ENCODE measurements at regions of chr14 and their contacts with region 1.

Region 1: DNA sequence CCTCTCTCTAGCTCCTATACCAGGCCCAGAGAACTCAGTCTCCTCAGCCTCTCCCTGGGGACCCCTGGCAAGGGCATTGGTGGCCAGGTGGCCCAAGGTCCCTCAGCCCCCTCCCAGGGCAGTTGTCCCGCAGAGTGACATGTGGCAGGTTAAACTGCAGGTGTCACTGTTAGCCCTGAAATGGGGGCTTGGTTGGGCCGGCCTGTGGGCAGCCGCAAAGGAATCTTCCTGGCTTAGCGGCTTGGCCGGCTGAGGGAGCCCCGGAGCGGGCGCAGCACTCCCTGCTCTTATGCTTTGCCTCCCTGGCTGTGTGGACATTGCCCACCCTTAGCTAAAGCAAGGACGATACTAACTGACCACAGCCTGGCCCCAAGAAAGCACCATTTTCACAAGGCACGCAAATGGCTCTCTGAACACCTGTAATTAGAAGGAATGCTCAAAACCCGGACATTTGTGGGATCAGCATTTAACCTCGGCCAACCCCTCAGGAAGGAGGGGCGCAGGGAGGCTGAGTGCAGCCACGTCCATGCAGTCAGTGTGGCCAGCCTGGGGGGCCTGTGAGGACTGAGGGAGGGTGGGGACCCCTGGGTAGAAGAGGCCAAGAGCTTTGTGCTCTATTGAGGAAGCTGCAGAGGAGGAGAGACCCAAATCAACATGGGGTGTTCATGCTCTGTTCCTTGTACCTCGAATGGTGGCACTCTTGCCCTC is 82.2 kb downstream of the PAPOLA start:
- DNase-seq: peak; percentile 57 to 62
- ATAC-seq: peak; percentile 76 to 93
- H3K4me3 ChIP-seq: no peak overlapping the region
- H3K27ac ChIP-seq: no peak overlapping the region
- H3K4me1 ChIP-seq: no peaks in the 10 kb centered on the region
- CTCF ChIP-seq: peak; percentile 61
- EP300 ChIP-seq: no peak
- POLR2A ChIP-seq: no peak
- RAD21 ChIP-seq: peak; percentile 86 to 88

Region 2: DNA sequence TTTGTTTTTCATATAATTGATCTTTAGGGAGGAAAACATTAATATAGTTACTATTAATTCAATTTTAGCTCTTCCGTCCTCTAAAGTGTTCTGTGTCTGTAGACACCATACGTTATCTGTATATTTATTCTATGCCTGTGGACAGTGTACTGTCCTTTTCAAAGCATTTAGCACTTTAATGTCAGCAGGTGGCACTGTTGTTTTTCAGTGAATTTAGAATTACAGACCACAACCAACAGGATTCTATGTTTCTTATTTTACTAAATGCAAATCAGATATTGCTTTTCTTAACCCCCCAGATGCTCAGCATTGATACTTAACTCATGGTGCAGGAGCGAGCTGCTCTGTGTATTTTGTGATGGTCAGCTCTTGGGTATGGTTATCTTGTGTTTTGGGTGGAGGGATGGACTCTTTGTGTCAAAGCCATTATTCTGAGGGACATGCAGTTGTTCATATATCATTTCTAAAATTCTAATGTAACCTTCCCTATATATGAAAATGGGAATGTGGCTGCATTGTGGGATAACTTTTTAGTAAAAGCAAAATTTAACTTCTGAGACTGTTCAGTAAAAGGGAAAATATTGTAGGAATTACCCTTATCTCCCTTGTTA is 17.0 kb before region 1 on chr14:
- CTCF ChIA-PET with region 1: interaction called, 30 read pairs
- POLR2A ChIA-PET with region 1: no interaction called
- DNase-seq: peak; percentile 31 to 36
- ATAC-seq: peak; percentile 91 to 93
- H3K4me3 ChIP-seq: no peak overlapping the region
- H3K27ac ChIP-seq: no peak overlapping the region
- H3K4me1 ChIP-seq: peaks cover 3% of the 10 kb centered on the region; the same call in 1 of the 3 replicates
- CTCF ChIP-seq: peak; percentile 72
- EP300 ChIP-seq: no peak
- POLR2A ChIP-seq: no peak
- RAD21 ChIP-seq: peak; percentile 42 to 47; a peak in 4 of 5 replicates

Region 3: DNA sequence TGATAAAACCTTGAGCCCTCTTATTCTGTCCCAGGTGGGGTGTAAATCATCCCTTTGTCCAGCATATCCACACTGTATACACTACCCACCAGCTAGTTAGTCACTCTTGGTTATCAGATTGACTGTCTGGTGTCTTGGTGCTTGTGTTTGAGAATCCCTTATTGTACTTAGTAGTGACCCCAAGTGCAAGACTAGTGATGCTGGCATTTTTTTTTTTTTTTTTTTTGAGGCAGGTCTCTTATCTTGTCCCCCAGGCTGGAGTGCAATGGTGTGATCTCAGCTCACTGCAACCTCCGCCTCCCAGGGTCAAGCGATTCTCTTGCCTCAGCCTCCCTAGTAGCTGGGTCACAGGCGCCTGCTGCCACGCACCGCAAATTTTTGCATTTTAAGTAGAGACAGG is 218.6 kb after region 1 on chr14:
- CTCF ChIA-PET with region 1: no interaction called
- POLR2A ChIA-PET with region 1: interaction called, 10 read pairs
- DNase-seq: no peak
- ATAC-seq: no peak
- H3K4me3 ChIP-seq: no peak overlapping the region
- H3K27ac ChIP-seq: no peak overlapping the region
- H3K4me1 ChIP-seq: peaks cover 18% of the 10 kb centered on the region; the same call in 2 of the 3 replicates
- CTCF ChIP-seq: no peak
- EP300 ChIP-seq: no peak
- POLR2A ChIP-seq: no peak
- RAD21 ChIP-seq: no peak

Region 4: DNA sequence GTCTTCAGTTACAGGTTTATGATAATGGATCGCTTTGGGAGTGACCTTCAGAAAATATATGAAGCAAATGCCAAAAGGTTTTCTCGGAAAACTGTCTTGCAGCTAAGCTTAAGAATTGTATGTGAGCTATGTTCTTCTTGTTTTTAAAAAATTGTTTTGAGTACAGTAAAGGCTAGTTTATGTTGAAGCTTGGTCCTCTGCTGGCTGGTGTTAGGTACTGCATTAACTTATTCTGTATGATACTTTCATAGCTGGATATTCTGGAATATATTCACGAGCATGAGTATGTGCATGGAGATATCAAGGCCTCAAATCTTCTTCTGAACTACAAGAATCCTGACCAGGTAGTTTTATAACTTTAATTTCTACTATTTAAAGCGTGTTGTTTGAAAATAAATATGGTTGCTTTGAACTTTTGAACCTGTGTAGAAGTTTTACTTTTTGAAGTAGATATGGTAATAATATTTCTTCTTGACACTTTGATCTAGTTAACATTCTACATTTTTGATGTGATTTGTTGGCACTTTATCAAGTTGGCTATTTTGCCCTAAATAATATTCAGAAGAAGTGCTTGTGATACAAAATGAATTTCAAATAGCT is 268.6 kb after region 1 on chr14:
- CTCF ChIA-PET with region 1: interaction called, 22 read pairs
- POLR2A ChIA-PET with region 1: no interaction called
- DNase-seq: peak; percentile 6 to 56
- ATAC-seq: peak; percentile 80 to 90; a peak in 5 of 6 replicates
- H3K4me3 ChIP-seq: no peak overlapping the region
- H3K27ac ChIP-seq: no peak overlapping the region
- H3K4me1 ChIP-seq: no peaks in the 10 kb centered on the region
- CTCF ChIP-seq: peak; percentile 56
- EP300 ChIP-seq: no peak
- POLR2A ChIP-seq: no peak
- RAD21 ChIP-seq: peak; percentile 28 to 43; a peak in 3 of 5 replicates